GM12878 (cell line): ENCODE measurements at regions of chr2 and their contacts with region 1.

Region 1: GRCh38 chr2:208265801-208266552 is at the start of gene PIKFYVE:
- DNase-seq: peak; percentile 91
- ATAC-seq: peak; percentile 92
- H3K4me3 ChIP-seq: peak within 1 kb of the TSS; percentile 86
- H3K27ac ChIP-seq: peak within 1 kb of the TSS; percentile 93
- H3K4me1 ChIP-seq: peaks cover 8% of the 10 kb centered on the region
- H3K27me3 ChIP-seq: no peaks in the 10 kb centered on the region
- CTCF ChIP-seq: peak in 1 of 3 experiments; percentile 11; a peak in 1 of 6 replicates
- EP300 ChIP-seq: peak; percentile 35 to 71; a peak in 3 of 4 replicates
- POLR2A ChIP-seq: peak; percentile 91
- RAD21 ChIP-seq: no peak; the same call in 1 of the 2 replicates
- polyA plus RNA-seq, gene PIKFYVE: 5.2 to 5.5 TPM

Region 2: GRCh38 chr2:207529330-207530159 is 736.4 kb before region 1 on chr2 and contains the start of gene CREB1:
- CTCF ChIA-PET with region 1: no interaction called
- POLR2A ChIA-PET with region 1: interaction called, 4 read pairs
- RAD21 ChIA-PET with region 1: no interaction called
- SMC1A ChIA-PET with region 1: no interaction called
- in situ Hi-C with region 1: no loop called
- intact Hi-C with region 1: loop called (anchors 10 kb)
- DNase-seq: peak; percentile 93
- ATAC-seq: peak; percentile 87
- H3K4me3 ChIP-seq: peak within 1 kb of the TSS; percentile 97
- H3K27ac ChIP-seq: peak within 1 kb of the TSS; percentile 99
- H3K4me1 ChIP-seq: peaks cover 26% of the 10 kb centered on the region
- H3K27me3 ChIP-seq: no peaks in the 10 kb centered on the region
- CTCF ChIP-seq: no peak; a peak in 1 of 6 replicates
- EP300 ChIP-seq: peak; percentile 77 to 79; a peak in 2 of 4 replicates
- POLR2A ChIP-seq: peak; percentile 94
- RAD21 ChIP-seq: no peak
- polyA plus RNA-seq, gene CREB1: 13.4 to 22.2 TPM

Region 3: DNA sequence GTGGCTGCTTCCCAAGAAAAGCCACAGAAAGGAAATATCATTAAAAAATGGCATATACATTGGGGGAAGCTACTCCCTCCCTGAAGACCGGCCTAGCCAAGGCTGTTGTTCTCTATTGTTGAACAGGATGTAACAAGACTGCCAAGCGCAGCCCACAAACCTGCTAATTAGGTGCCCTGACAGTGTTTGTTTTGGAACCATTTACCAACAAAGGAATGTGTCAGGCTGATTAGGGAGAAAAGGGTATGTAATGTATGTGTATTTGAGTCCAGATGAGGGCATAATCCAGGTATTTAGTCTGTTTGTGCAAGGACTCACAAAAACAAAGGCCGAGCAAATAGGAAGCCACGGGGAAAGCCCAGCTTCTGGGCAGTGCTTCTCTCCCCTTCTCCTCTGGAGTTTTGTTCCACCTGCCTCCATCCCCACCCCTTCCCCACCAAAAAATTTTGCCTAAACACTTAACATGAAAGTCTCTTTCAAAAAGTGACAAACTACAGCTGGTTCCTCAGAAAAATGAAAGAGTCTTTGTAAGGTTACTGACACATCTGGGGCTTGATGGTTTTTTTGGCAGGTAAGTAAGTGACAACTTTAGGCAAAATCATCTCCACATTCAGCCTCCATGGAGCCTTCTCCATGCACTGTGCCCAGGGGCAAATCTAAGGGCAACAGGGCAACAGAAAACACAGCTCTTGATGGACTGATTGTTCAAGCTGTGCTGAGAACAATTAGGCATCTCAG is 418.0 kb before region 1 on chr2:
- CTCF ChIA-PET with region 1: no interaction called
- POLR2A ChIA-PET with region 1: no interaction called
- RAD21 ChIA-PET with region 1: no interaction called
- SMC1A ChIA-PET with region 1: no interaction called
- in situ Hi-C with region 1: no loop called
- intact Hi-C with region 1: no loop called
- DNase-seq: no peak
- ATAC-seq: peak; percentile 48; the same call in 2 of the 3 replicates
- H3K4me3 ChIP-seq: no peak overlapping the region
- H3K27ac ChIP-seq: no peak overlapping the region
- H3K4me1 ChIP-seq: no peaks in the 10 kb centered on the region
- H3K27me3 ChIP-seq: no peaks in the 10 kb centered on the region
- CTCF ChIP-seq: no peak
- EP300 ChIP-seq: no peak
- POLR2A ChIP-seq: no peak
- RAD21 ChIP-seq: no peak

Region 4: GRCh38 chr2:208254871-208255556 is 11.0 kb before region 1 on chr2 and contains the start of gene IDH1:
- CTCF ChIA-PET with region 1: interaction called, 69 read pairs
- POLR2A ChIA-PET with region 1: interaction called, 49 read pairs
- RAD21 ChIA-PET with region 1: interaction called, 43 read pairs
- SMC1A ChIA-PET with region 1: interaction called, 37 read pairs
- in situ Hi-C with region 1: no loop called
- intact Hi-C with region 1: loop called (anchors 1 kb)
- DNase-seq: peak; percentile 60
- ATAC-seq: peak; percentile 80
- H3K4me3 ChIP-seq: peak within 1 kb of the TSS; percentile 98
- H3K27ac ChIP-seq: peak within 1 kb of the TSS; percentile 35
- H3K4me1 ChIP-seq: no peaks in the 10 kb centered on the region; the same call in 1 of the 2 replicates
- H3K27me3 ChIP-seq: no peaks in the 10 kb centered on the region
- CTCF ChIP-seq: peak; percentile 37 to 52 (median 44); a peak in 5 of 6 replicates
- EP300 ChIP-seq: no peak
- POLR2A ChIP-seq: peak; percentile 52; the same call in 1 of the 2 replicates
- RAD21 ChIP-seq: no peak
- polyA plus RNA-seq, gene IDH1: 56.0 to 67.7 TPM

Region 5: DNA sequence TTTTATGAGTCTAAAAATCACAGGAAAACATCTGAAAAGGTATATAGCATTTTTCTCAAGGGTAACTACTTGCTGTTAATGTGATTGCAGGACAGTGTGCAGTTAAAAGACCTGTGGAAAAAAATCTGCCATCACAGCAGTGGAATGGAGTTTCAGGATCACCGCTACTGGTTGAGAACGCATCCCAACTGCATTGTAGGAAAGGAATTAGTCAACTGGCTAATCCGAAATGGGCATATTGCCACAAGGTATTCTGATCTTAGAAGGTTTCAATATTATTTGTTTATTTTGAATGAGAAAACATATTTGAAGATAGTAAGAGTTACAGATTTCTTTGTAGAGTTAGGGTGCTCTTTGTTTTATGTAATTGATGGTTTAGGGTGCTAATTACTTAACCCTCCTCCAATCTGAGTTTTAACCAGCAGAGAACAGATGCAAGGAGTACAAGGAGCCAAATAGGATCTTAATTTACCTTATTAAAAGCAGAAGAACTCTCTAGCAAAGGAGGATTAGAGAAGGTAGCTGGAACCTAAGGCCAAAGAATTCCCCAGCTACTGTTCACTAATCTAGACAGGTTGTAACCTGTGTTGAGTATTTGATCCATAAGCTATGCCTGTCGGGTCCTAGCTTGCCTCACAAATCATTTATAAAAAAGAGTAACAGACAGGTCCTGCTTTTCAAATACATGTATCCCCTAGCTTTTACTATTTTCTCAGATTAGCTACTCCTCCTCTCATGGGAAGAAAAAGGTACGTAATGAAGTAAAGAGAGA is 35.1 kb after region 1 on chr2:
- CTCF ChIA-PET with region 1: interaction called, 14 read pairs
- POLR2A ChIA-PET with region 1: interaction called, 3 read pairs
- RAD21 ChIA-PET with region 1: interaction called, 4 read pairs
- SMC1A ChIA-PET with region 1: interaction called, 5 read pairs
- in situ Hi-C with region 1: no loop called
- intact Hi-C with region 1: no loop called
- DNase-seq: no peak
- ATAC-seq: no peak
- H3K4me3 ChIP-seq: no peak overlapping the region
- H3K27ac ChIP-seq: no peak overlapping the region
- H3K4me1 ChIP-seq: no peaks in the 10 kb centered on the region
- H3K27me3 ChIP-seq: no peaks in the 10 kb centered on the region
- CTCF ChIP-seq: no peak
- EP300 ChIP-seq: no peak
- POLR2A ChIP-seq: no peak
- RAD21 ChIP-seq: no peak

Region 6: DNA sequence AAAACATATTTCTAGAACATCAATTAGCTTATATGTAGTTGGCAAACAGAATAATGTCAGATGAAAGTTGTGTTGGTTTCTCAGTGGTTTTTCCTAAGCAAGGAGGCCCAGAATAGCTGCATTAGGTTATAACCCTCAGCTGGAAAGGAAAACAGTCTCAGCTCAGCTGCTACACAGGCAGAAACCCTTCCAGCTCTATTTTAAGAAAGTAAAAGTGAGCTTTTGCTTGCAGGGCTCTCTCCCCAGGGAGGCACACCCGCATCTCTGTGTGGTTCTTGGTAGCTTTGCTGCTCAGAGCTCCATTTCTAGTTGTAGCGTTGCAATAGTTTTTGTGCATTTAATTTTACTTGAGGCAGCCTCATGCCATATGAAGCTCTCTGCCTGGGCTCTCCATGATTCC is 54.7 kb after region 1 on chr2:
- CTCF ChIA-PET with region 1: interaction called, 14 read pairs
- POLR2A ChIA-PET with region 1: interaction called, 68 read pairs
- RAD21 ChIA-PET with region 1: interaction called, 11 read pairs
- SMC1A ChIA-PET with region 1: interaction called, 77 read pairs
- in situ Hi-C with region 1: no loop called
- intact Hi-C with region 1: loop called (anchors 1 kb)
- DNase-seq: peak; percentile 19
- ATAC-seq: peak; percentile 77
- H3K4me3 ChIP-seq: no peak overlapping the region
- H3K27ac ChIP-seq: no peak overlapping the region
- H3K4me1 ChIP-seq: peaks cover 22% of the 10 kb centered on the region
- H3K27me3 ChIP-seq: no peaks in the 10 kb centered on the region
- CTCF ChIP-seq: no peak
- EP300 ChIP-seq: no peak
- POLR2A ChIP-seq: no peak
- RAD21 ChIP-seq: no peak; the same call in 1 of the 2 replicates